ENCODE measurements at regions of chr22 and their contacts with region 1.

Region 1: DNA sequence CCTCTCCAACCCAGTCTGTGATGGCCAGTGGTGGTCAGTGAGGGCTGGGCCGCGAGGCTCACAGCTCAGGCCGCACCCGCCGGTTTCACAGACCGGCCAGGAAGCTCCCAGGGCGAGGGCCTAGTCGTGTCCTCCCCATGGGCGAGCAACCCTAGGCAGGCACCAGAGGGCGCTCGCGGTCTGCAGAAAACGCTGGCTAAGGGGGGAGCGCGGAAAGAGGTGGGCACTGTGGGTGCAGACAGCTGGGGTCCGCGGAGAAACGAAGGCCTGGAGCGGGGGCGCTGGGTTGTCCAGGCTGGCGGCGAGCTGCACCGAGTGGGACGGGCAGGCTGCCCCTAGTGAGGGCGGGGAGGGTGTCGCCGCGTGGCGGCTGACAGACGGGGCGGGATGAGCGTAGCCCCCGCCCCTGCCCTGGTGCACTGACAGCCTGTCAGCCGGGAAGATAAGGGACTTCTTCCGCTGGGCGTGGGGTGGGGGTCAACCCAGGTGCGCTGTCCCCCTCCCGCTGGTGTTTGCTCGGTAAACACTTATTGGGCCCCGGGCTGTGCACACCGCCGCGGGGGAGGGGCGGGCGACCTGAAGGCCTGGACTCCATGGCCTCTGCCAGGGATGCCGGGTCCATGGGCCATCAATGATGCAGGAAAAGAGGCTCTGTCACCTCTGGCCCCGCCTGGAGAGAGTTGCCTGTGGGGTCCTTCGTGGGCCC is 7.5 kb downstream of the GP1BB start:
- DNase-seq: peak; percentile 91
- CTCF ChIP-seq: peak; percentile 95

Region 2: DNA sequence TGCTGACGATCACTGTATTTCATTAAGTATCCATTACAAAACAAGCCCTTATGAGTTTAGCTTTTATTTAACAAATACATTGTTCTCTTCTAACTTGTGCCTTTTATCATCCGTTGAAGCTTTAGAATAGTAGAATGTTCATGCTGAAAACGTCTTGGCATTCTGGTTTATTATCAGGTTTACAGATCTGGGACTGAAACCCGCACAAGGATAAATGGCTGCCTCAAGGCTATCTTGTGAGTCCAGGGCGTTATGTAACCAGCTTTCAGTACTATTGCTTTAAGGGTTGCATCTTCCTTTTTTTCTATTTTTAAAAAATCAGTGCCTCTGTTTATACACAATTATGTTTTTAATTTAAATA is 728.1 kb before region 1 on chr22:
- CTCF ChIA-PET with region 1: no interaction called
- POLR2A ChIA-PET with region 1: no interaction called
- DNase-seq: no peak
- CTCF ChIP-seq: no peak

Region 3: GRCh38 chr22:19745155-19746101 is 14.6 kb after region 1 on chr22:
- CTCF ChIA-PET with region 1: interaction called, 17 read pairs
- POLR2A ChIA-PET with region 1: no interaction called
- DNase-seq: no peak
- CTCF ChIP-seq: no peak

Region 4: GRCh38 chr22:19756288-19757128 is 25.7 kb after region 1 on chr22:
- CTCF ChIA-PET with region 1: interaction called, 25 read pairs
- POLR2A ChIA-PET with region 1: no interaction called
- DNase-seq: peak; percentile 80
- CTCF ChIP-seq: peak; percentile 64

Region 5: DNA sequence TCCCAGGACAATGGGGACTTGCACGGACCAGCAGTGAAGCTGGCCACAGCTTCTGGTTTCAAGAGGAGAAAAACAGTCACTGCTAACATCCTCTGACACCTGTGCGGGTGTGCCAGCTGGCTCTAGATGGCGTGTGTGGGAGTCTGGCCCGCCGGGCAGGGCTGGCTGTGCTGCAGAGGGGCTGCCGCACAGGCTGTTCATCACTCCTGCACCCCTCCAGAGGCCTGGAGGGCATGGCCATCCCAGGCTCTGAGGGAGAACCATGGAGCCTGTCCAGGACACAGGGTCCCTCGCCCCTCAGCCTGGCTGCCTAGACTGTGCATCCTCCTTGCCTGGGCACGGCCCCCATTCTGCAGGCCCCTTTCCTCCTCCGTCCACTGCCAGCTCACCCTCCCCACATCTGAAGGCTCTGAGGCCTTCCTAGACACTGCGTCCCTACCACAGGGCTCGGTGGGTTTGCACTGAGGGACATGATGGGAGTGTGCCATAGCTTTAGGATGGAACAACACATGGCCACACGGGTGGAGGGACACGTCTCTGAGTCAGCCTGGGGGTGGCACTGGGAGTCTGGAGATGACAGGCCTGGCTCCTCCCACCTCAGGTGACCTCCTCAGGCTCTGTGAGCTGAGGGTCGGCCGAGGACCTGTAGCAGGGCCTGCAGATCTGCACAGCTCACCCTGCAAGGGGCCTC is 166.0 kb after region 1 on chr22:
- CTCF ChIA-PET with region 1: interaction called, 46 read pairs
- POLR2A ChIA-PET with region 1: no interaction called
- DNase-seq: no peak
- CTCF ChIP-seq: no peak

Region 6: GRCh38 chr22:19909350-19910179 is 178.8 kb after region 1 on chr22:
- CTCF ChIA-PET with region 1: interaction called, 189 read pairs
- POLR2A ChIA-PET with region 1: no interaction called
- DNase-seq: peak; percentile 88
- CTCF ChIP-seq: peak; percentile 97

Region 7: DNA sequence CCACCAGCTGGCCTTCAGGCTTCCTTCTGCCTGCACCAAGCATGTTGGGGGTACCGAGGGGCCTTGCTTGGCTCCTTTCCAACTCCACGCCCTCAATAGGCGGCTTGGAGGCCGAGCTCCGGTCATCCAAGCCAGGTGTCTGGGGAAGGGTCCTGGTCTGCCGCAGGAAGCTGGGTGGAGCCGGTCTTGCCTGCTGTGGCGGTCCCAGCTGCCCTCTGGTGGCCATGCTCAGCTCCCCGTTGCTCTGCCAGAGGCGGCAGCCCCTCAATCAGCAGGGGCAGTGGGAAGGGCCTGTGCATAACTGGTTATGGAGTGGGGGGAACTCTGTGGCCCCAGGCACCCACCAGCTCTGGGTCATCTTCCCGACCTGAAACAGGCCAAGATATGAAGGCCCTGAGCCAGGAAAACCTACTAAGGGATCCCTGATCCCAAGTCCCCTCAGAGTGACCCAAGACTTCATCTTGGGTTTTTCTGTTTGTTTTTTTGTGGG is 282.6 kb after region 1 on chr22:
- CTCF ChIA-PET with region 1: interaction called, 20 read pairs
- POLR2A ChIA-PET with region 1: no interaction called
- DNase-seq: peak; percentile 70
- CTCF ChIP-seq: peak; percentile 77